B cell (primary cell): ENCODE measurements at regions of chr18 and their contacts with region 1.

Region 1: DNA sequence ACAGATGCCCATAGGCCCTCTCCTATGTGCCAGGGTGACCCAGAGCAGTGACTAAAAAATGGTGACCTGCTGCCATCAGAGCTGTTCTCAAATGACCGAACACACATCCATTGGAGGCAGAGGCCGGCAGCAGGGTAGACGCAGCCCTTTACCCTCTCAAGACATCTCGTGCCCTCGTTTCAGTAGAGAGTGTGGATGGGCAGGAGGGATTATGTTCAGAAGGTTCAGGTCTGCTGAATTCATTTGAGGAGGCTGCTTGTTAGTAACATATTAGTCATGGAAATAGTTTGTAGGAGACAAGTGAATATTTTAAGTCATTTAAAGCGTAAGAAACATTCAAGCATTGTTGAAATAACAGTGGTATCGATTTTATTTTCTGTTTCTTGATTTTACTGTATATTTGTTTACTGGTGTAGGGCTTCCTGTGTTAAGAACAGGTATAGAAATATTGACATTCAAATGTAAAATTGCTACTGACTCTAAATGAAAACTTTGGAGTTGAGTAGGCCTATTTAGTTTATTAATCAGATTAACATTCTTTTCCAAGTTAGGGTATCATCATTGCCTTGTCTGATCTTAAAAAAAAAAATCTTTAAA is 82.6 kb downstream of the ZNF532 start:
- DNase-seq: no peak
- ATAC-seq: no peak
- H3K4me3 ChIP-seq: no peak overlapping the region
- H3K4me3 Mint-ChIP-seq: peak overlapping the region; percentile 77
- H3K27ac ChIP-seq: peak overlapping the region; percentile 81 to 95
- H3K27ac Mint-ChIP-seq: peak overlapping the region; percentile 98
- H3K4me1 ChIP-seq: peaks cover 30 to 41% of the 10 kb centered on the region in 2 donors
- H3K4me1 Mint-ChIP-seq: peaks cover 57% of the 10 kb centered on the region
- H3K27me3 ChIP-seq: no peaks in the 10 kb centered on the region
- H3K27me3 Mint-ChIP-seq: no peaks in the 10 kb centered on the region
- CTCF ChIP-seq: no peak

Region 2: DNA sequence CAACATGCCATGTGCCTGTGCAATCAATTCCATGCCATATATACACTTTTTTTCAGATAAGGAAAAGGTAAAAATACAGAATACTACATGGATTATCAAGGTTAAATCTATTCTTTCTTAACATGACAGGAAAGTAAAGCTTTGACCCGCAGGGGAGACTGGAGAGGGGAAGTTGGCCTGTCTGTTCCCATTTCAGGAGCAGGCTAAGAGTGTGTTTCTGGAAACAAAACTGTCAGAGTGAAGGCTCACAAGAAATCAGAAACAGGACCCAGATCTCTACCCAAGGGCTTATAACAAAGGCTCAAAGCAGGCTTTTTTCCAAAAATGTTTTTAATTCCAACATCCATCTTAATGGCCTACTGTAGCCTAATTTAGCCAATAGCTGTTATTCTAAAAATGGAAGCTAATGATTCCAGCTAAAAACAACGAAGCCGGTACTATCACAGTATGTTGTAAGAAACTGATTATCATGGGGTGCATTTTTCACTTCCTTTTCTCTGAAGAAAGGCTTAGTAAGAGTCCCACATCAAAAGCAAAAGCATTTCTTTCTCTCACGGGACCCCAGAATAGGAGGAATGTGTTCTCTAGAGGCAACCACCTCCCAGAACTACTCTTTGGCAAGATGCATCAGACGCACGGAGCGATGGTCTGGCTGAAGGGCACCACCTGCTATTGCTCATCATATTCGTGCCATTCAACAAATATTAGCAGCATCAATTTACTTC is 1402.1 kb before region 1 on chr18:
- CTCF ChIA-PET with region 1: no interaction called
- POLR2A ChIA-PET with region 1: no interaction called
- intact Hi-C with region 1: no loop called
- DNase-seq: no peak
- ATAC-seq: no peak
- H3K4me3 ChIP-seq: no peak overlapping the region
- H3K4me3 Mint-ChIP-seq: no peak overlapping the region
- H3K27ac ChIP-seq: no peak overlapping the region
- H3K27ac Mint-ChIP-seq: no peak overlapping the region
- H3K4me1 ChIP-seq: peaks cover 0 to 4% of the 10 kb centered on the region in 2 donors
- H3K4me1 Mint-ChIP-seq: peaks cover 12% of the 10 kb centered on the region
- H3K27me3 ChIP-seq: no peaks in the 10 kb centered on the region
- H3K27me3 Mint-ChIP-seq: peaks cover 4% of the 10 kb centered on the region
- CTCF ChIP-seq: no peak

Region 3: DNA sequence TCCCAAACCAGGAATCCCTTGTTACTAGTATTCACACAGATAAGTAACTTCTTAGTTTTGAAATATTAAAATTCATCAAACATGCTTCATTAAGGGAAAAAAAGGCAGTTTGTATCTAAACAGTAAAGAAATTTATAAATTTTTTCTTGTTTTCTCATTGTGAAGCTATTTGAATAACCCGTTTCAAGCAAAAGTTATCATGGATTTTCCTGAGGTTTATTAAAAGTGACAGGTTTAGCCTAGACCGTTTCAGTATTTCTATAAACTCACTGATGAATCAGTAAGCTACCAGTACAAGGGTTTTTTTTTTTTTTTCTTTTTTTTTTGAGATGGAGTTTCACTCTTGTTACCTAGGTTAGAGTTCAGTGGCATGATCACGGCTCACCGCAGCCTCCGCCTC is 62.6 kb before region 1 on chr18:
- CTCF ChIA-PET with region 1: no interaction called
- POLR2A ChIA-PET with region 1: no interaction called
- intact Hi-C with region 1: no loop called
- DNase-seq: no peak
- ATAC-seq: no peak
- H3K4me3 ChIP-seq: no peak overlapping the region
- H3K4me3 Mint-ChIP-seq: no peak overlapping the region
- H3K27ac ChIP-seq: no peak overlapping the region
- H3K27ac Mint-ChIP-seq: no peak overlapping the region
- H3K4me1 ChIP-seq: peaks cover 13 to 15% of the 10 kb centered on the region in 2 donors
- H3K4me1 Mint-ChIP-seq: peaks cover 23% of the 10 kb centered on the region
- H3K27me3 ChIP-seq: no peaks in the 10 kb centered on the region
- H3K27me3 Mint-ChIP-seq: no peaks in the 10 kb centered on the region
- CTCF ChIP-seq: no peak

Region 4: DNA sequence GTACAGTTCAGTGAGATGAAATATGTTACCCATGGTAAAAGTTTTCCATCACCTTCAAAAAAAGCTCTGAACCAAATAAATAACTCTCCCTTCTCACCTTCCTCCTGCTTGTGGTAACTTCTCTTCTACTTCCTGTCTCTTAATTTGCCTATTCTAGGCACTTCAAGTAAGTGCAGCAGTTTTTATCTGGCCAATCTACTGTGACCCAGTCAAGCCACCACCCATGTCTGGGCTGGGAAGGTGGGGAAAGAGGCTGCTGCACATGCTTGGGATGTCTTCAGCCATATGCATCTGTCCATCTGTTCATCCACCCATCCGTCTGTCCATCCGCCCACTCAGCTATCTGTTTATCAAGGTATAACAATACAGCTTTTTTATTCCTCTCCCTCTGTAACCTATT is 51.0 kb before region 1 on chr18:
- CTCF ChIA-PET with region 1: no interaction called
- POLR2A ChIA-PET with region 1: interaction called, 4 read pairs
- intact Hi-C with region 1: loop called (anchors 5 kb)
- DNase-seq: peak; percentile 72
- ATAC-seq: peak; percentile 88
- H3K4me3 ChIP-seq: peak overlapping the region in 4 of 5 experiments; percentile 31 to 58 (median 50)
- H3K4me3 Mint-ChIP-seq: peak overlapping the region; percentile 79
- H3K27ac ChIP-seq: peak overlapping the region; percentile 70 to 86
- H3K27ac Mint-ChIP-seq: peak overlapping the region; percentile 86
- H3K4me1 ChIP-seq: peaks cover 58 to 62% of the 10 kb centered on the region in 2 donors
- H3K4me1 Mint-ChIP-seq: peaks cover 76% of the 10 kb centered on the region
- H3K27me3 ChIP-seq: no peaks in the 10 kb centered on the region
- H3K27me3 Mint-ChIP-seq: no peaks in the 10 kb centered on the region
- CTCF ChIP-seq: no peak

Region 5: DNA sequence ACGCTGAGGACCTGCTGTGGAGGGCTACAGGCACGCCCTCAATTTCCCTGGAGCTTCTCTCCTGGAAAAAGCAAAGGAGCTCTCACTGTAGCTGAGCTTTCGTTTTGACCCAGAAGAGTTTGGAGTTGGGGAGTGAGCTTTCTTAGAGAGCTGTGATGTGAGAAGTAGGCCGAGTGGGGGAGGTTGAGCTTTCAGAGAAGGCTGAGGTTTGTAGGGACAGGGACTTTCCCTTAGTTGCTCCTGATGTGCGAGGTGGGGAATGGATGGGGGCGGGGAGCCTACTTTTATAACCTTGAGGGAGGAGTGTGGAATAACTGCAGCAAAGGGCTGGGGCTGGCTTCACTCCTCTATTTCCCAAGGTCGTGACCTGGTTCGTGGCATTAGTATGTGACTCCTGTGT is 35.5 kb before region 1 on chr18:
- CTCF ChIA-PET with region 1: no interaction called
- POLR2A ChIA-PET with region 1: no interaction called
- intact Hi-C with region 1: loop called (anchors 5 kb)
- DNase-seq: no peak
- ATAC-seq: no peak
- H3K4me3 ChIP-seq: no peak overlapping the region
- H3K4me3 Mint-ChIP-seq: peak overlapping the region; percentile 9
- H3K27ac ChIP-seq: peak overlapping the region in 1 of 2 donors; percentile 89
- H3K27ac Mint-ChIP-seq: peak overlapping the region; percentile 83
- H3K4me1 ChIP-seq: peaks cover 34 to 52% of the 10 kb centered on the region in 2 donors
- H3K4me1 Mint-ChIP-seq: peaks cover 68% of the 10 kb centered on the region
- H3K27me3 ChIP-seq: no peaks in the 10 kb centered on the region
- H3K27me3 Mint-ChIP-seq: no peaks in the 10 kb centered on the region
- CTCF ChIP-seq: no peak

Region 6: DNA sequence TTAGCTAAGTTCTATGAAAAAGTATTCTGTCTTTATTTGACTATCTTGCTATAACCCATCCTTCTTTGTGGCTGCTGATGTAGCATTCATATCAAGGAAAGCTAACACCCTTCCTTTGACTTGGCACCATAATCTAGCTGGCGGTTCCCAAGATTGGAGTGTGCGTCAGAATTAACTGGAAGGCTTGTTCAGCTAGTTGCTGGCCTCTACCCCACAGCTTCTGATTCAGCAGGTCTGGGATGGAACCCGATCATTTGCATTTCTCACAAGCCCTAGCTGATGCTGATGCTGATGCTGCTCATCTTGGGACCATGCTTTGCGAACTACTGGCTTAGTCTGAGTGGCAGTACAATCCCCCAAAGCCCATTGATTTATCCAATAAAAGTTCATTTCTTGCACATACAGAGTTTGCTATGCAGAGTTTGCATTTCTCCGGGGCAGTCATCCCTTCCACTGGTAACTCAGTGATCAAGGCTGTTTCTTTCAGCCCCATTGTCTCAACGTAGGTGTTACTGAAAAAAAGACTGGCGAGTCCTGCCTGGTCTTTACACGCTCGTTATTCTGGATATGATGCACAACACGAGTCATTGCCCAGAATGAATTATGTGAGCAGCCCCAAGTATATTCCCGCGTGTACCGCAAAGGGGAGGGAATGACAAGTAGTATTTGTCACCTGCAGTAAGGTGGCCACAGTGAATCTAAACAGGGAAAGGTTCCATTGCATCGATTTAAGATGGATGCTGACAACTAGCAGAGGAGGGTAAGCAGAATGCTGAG is 13.9 kb after region 1 on chr18:
- CTCF ChIA-PET with region 1: interaction called, 7 read pairs
- POLR2A ChIA-PET with region 1: interaction called, 3 read pairs
- intact Hi-C with region 1: loop called (anchors 1 kb)
- DNase-seq: no peak
- ATAC-seq: no peak
- H3K4me3 ChIP-seq: no peak overlapping the region
- H3K4me3 Mint-ChIP-seq: peak overlapping the region; percentile 35
- H3K27ac ChIP-seq: peak overlapping the region in 1 of 2 donors; percentile 16
- H3K27ac Mint-ChIP-seq: peak overlapping the region; percentile 77
- H3K4me1 ChIP-seq: peaks cover 32 to 33% of the 10 kb centered on the region in 2 donors
- H3K4me1 Mint-ChIP-seq: peaks cover 50% of the 10 kb centered on the region
- H3K27me3 ChIP-seq: no peaks in the 10 kb centered on the region
- H3K27me3 Mint-ChIP-seq: no peaks in the 10 kb centered on the region
- CTCF ChIP-seq: no peak

Region 7: DNA sequence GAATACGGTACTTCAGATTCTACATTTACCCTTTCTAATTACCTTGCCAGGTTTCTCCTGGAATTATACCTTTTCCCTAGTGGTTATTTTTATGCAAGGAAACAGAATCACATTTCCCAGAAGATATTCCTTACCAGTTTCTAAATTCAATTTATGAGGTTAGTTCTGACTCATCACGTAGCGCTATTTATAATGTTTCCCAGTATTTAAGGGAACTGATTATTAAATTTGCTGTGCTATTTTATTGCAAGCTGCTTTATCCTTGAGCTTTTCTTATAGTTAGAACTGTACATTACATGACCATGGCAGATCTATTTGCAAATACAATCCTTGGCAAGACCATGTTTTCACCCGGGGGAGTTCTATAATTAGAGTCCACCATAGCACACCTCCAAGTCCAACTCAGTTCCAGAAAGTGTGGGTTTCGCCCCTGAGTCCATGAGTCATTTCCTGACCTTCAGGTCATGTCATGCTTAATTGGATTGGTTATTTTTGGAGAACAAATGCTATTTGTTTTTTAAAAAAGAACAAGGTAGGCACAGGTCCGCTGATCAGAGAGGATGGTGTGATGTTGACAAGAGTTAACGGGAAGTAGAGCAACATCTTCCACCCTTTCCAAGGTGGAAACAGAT is 44.0 kb after region 1 on chr18:
- CTCF ChIA-PET with region 1: no interaction called
- POLR2A ChIA-PET with region 1: no interaction called
- intact Hi-C with region 1: loop called (anchors 5 kb)
- DNase-seq: no peak
- ATAC-seq: peak; percentile 54
- H3K4me3 ChIP-seq: no peak overlapping the region
- H3K4me3 Mint-ChIP-seq: peak overlapping the region; percentile 44
- H3K27ac ChIP-seq: no peak overlapping the region
- H3K27ac Mint-ChIP-seq: peak overlapping the region; percentile 79
- H3K4me1 ChIP-seq: peaks cover 21 to 22% of the 10 kb centered on the region in 2 donors
- H3K4me1 Mint-ChIP-seq: peaks cover 30% of the 10 kb centered on the region
- H3K27me3 ChIP-seq: no peaks in the 10 kb centered on the region
- H3K27me3 Mint-ChIP-seq: no peaks in the 10 kb centered on the region
- CTCF ChIP-seq: no peak